ENCODE measurements at regions of chr3 and their contacts with region 1.

Region 1: GRCh38 chr3:52123106-52123725 is 31.0 kb downstream of the POC1A start:
- DNase-seq: peak; percentile 60
- ATAC-seq: peak; percentile 74
- H3K4me3 Mint-ChIP-seq: no peak overlapping the region
- H3K27ac Mint-ChIP-seq: peak overlapping the region; percentile 82
- H3K4me1 Mint-ChIP-seq: peaks cover 34% of the 10 kb centered on the region
- H3K27me3 Mint-ChIP-seq: no peaks in the 10 kb centered on the region
- CTCF ChIP-seq: no peak

Region 2: GRCh38 chr3:51953445-51953844 is 169.8 kb before region 1 on chr3:
- CTCF ChIA-PET with region 1: no interaction called
- POLR2A ChIA-PET with region 1: no interaction called
- intact Hi-C with region 1: no loop called
- DNase-seq: no peak
- ATAC-seq: no peak
- H3K4me3 Mint-ChIP-seq: no peak overlapping the region
- H3K27ac Mint-ChIP-seq: no peak overlapping the region
- H3K4me1 Mint-ChIP-seq: peaks cover 2% of the 10 kb centered on the region
- H3K27me3 Mint-ChIP-seq: peaks cover 19% of the 10 kb centered on the region
- CTCF ChIP-seq: no peak

Region 3: DNA sequence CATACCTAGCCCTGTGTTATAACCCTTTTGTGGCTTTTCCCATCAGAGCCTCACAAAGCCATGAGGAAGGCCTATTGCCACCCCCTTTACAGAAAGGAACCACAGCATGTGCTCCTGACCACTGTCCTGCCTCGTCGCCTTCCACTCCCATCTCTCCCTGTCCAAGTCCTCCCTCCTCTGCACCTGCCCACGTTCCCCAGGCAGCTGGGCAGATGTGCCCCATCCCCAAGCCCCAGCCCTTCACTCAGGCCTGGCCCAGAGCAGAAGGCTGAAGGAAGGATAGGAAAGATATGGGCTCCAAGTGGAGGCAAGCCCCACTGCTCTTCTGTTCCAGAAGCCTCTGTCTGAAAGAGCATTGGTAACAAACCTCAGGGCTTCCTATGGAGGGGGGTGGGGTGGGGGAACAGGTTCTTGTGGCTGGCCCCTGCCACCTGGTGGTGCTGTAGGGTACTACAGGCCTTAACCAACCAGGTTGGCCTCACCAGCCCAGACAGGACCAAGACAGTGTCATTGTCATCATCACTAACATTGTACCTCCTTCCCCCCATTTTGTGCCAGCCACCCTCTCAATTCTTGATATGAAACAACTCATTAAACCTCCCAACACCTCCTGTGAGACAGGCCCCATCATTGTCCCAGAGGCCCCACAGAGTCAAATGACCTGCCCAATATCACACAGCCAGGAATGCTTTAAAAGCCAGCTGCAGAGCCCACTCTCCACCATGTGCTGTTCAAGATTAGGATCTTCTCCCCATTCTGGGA is 21.0 kb after region 1 on chr3:
- CTCF ChIA-PET with region 1: interaction called, 9 read pairs
- POLR2A ChIA-PET with region 1: no interaction called
- intact Hi-C with region 1: loop called (anchors 1 kb)
- DNase-seq: peak; percentile 73
- ATAC-seq: peak; percentile 100
- H3K4me3 Mint-ChIP-seq: no peak overlapping the region
- H3K27ac Mint-ChIP-seq: no peak overlapping the region
- H3K4me1 Mint-ChIP-seq: peaks cover 4% of the 10 kb centered on the region
- H3K27me3 Mint-ChIP-seq: no peaks in the 10 kb centered on the region
- CTCF ChIP-seq: peak; percentile 66